Right cardiac atrium (tissue), 5 donors: ENCODE measurements at regions of chr18 and their contacts with region 1.

Region 1: GRCh38 chr18:51153659-51154371 is 43.7 kb downstream of the MEX3C start:
- DNase-seq: no peak
- ATAC-seq: peak in 1 of 2 donors; percentile 14
- H3K4me3 ChIP-seq: no peak overlapping the region
- H3K27ac ChIP-seq: no peak overlapping the region
- H3K4me1 ChIP-seq: no peaks in the 10 kb centered on the region
- H3K27me3 ChIP-seq: no peaks in the 10 kb centered on the region

Region 2: DNA sequence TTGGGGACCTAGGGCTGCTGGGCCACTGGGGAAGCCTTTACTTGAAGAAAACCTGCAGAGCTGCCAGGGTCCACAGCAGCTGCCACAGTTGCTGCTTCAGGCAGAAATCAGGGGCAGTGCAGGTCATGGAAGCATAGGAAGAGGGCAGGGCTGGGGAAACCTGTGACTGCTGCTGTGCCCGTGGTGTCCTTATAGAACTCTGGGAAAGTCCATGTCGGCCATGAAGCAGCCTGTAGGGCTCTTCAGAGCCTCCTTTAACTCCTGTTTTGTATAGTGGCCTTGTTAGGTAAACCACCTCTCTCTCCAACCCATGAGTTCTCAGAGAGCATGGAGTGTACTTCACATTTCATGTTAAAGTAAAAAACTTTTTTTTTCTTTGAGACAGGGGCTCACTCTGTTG is 61.7 kb before region 1 on chr18:
- intact Hi-C with region 1: loop called in 1 of 4 experiments (anchors 10 kb)
- DNase-seq: no peak
- ATAC-seq: no peak
- H3K4me3 ChIP-seq: no peak overlapping the region
- H3K27ac ChIP-seq: no peak overlapping the region
- H3K4me1 ChIP-seq: no peaks in the 10 kb centered on the region
- H3K27me3 ChIP-seq: no peaks in the 10 kb centered on the region